GM12878 (cell line): ENCODE measurements at regions of chr11 and their contacts with region 1.

Region 1: GRCh38 chr11:61041755-61042518 is 60.4 kb upstream of the CD5 start:
- DNase-seq: no peak
- ATAC-seq: peak; percentile 89
- H3K4me3 ChIP-seq: peak overlapping the region; percentile 51; the same call in 1 of the 2 replicates
- H3K27ac ChIP-seq: peak overlapping the region; percentile 77
- H3K4me1 ChIP-seq: peaks cover 15% of the 10 kb centered on the region
- H3K27me3 ChIP-seq: no peaks in the 10 kb centered on the region
- CTCF ChIP-seq: no peak
- EP300 ChIP-seq: peak in 1 of 2 experiments; percentile 26; a peak in 2 of 4 replicates
- POLR2A ChIP-seq: peak; percentile 79
- RAD21 ChIP-seq: no peak; the same call in 1 of the 2 replicates

Region 2: GRCh38 chr11:60978546-60979380 is 63.2 kb before region 1 on chr11:
- CTCF ChIA-PET with region 1: interaction called, 3 read pairs
- POLR2A ChIA-PET with region 1: interaction called, 3 read pairs
- RAD21 ChIA-PET with region 1: interaction called, 11 read pairs
- SMC1A ChIA-PET with region 1: interaction called, 7 read pairs
- in situ Hi-C with region 1: no loop called
- intact Hi-C with region 1: no loop called
- DNase-seq: peak; percentile 21
- ATAC-seq: peak; percentile 71
- H3K4me3 ChIP-seq: no peak overlapping the region
- H3K27ac ChIP-seq: no peak overlapping the region
- H3K4me1 ChIP-seq: no peaks in the 10 kb centered on the region
- H3K27me3 ChIP-seq: no peaks in the 10 kb centered on the region
- CTCF ChIP-seq: no peak
- EP300 ChIP-seq: no peak
- POLR2A ChIP-seq: no peak
- RAD21 ChIP-seq: no peak

Region 3: DNA sequence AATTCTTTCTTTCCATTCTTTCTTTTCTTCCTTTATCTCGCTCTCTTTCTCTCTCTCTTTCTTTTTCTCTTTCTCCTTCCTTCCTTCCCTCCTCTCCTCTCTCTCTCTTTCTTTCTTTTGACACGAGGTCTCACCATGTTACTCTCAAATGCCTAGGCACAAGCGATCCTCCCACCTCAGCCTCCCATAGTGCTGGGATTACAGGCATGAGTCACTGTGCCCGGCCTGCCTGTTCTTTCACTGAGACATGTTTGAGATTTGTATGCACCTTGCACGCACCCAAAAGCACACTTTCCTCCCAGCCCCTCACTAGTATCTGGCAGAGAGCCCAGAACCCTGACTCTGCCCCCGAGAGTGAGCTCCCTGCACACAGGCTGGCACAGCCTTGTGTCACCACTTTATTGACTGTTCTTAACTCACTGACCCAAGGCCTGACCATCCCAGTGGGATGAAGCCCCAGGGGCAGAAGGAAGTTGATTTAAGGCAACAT is 13.6 kb before region 1 on chr11:
- CTCF ChIA-PET with region 1: interaction called, 4 read pairs
- POLR2A ChIA-PET with region 1: interaction called, 5 read pairs
- RAD21 ChIA-PET with region 1: interaction called, 13 read pairs
- SMC1A ChIA-PET with region 1: interaction called, 31 read pairs
- in situ Hi-C with region 1: no loop called
- intact Hi-C with region 1: no loop called
- DNase-seq: peak; percentile 76
- ATAC-seq: peak; percentile 80
- H3K4me3 ChIP-seq: no peak overlapping the region
- H3K27ac ChIP-seq: peak overlapping the region; percentile 56
- H3K4me1 ChIP-seq: peaks cover 35% of the 10 kb centered on the region
- H3K27me3 ChIP-seq: no peaks in the 10 kb centered on the region
- CTCF ChIP-seq: no peak
- EP300 ChIP-seq: no peak
- POLR2A ChIP-seq: no peak
- RAD21 ChIP-seq: no peak

Region 4: GRCh38 chr11:61071208-61071681 is 29.3 kb after region 1 on chr11:
- CTCF ChIA-PET with region 1: interaction called, 4 read pairs
- POLR2A ChIA-PET with region 1: interaction called, 13 read pairs
- RAD21 ChIA-PET with region 1: interaction called, 57 read pairs
- SMC1A ChIA-PET with region 1: interaction called, 98 read pairs
- in situ Hi-C with region 1: no loop called
- intact Hi-C with region 1: no loop called
- DNase-seq: no peak
- ATAC-seq: peak; percentile 88
- H3K4me3 ChIP-seq: no peak overlapping the region
- H3K27ac ChIP-seq: peak overlapping the region; percentile 81
- H3K4me1 ChIP-seq: peaks cover 18% of the 10 kb centered on the region
- H3K27me3 ChIP-seq: no peaks in the 10 kb centered on the region
- CTCF ChIP-seq: no peak
- EP300 ChIP-seq: 0 out of 4 replicates have a peak, but pooled peaks of 1 of the 2 experiments have one; percentile 24
- POLR2A ChIP-seq: peak; percentile 74
- RAD21 ChIP-seq: 0 out of 2 replicates have a peak, but pooled peaks have one; percentile 19

Region 5: DNA sequence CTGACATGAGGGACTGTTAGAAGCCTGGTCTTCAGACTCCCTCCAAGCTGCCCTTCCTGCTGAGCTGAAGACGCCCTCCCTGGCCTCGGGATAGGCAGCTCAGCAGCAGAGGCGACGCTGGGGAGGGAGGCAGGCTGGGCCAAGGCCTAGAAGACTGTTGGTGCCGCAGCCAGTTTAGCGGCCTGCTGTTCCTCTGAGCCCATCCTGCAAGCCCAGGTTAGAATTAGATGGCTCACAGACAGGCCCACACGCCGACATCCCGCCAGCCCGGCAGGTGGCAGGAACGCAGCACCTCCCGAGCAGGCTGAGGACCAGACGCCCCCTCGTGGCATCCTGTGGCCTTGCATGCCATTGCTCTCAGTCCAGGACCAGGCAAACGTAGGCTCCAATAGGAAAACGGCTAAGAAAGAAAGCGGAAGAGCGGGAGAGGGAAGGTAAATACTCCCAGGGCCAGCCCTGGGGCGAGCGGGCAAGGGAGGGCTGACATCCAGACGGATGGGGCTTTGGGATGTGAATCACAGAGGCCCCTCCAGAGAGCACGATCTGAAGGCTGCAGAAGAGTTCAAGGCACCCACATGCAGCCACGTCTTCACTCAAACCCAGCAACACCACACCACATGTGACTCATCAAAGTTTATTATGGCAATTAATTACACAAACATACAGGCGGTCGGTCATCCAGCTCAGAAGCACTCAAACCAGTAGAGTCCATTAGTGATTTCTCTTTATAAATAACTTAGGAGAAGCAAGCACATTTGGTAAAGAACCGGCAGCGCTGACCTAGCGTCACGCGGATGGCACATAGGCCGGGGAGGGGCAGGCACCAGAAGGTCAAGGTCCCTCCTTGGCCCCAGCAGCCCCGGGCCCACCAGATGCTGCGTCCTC is 87.9 kb after region 1 on chr11:
- CTCF ChIA-PET with region 1: interaction called, 9 read pairs
- POLR2A ChIA-PET with region 1: interaction called, 3 read pairs
- RAD21 ChIA-PET with region 1: interaction called, 12 read pairs
- SMC1A ChIA-PET with region 1: interaction called, 5 read pairs
- in situ Hi-C with region 1: no loop called
- intact Hi-C with region 1: loop called (anchors 5 kb)
- DNase-seq: peak; percentile 44
- ATAC-seq: peak; percentile 97
- H3K4me3 ChIP-seq: no peak overlapping the region
- H3K27ac ChIP-seq: peak overlapping the region; percentile 52; the same call in 1 of the 2 replicates
- H3K4me1 ChIP-seq: peaks cover 7% of the 10 kb centered on the region
- H3K27me3 ChIP-seq: no peaks in the 10 kb centered on the region
- CTCF ChIP-seq: peak; percentile 100
- EP300 ChIP-seq: no peak
- POLR2A ChIP-seq: no peak; the same call in 1 of the 2 replicates
- RAD21 ChIP-seq: peak; percentile 100